ENCODE measurements at regions of chr10 and their contacts with region 1.

Region 1: GRCh38 chr10:21495752-21496342 is 29.6 kb downstream of the SKIDA1 start:
- DNase-seq: peak; percentile 94
- ATAC-seq: peak; percentile 89

Region 2: GRCh38 chr10:21238717-21239116 is 257.1 kb before region 1 on chr10:
- intact Hi-C with region 1: no loop called
- DNase-seq: no peak
- ATAC-seq: no peak

Region 3: DNA sequence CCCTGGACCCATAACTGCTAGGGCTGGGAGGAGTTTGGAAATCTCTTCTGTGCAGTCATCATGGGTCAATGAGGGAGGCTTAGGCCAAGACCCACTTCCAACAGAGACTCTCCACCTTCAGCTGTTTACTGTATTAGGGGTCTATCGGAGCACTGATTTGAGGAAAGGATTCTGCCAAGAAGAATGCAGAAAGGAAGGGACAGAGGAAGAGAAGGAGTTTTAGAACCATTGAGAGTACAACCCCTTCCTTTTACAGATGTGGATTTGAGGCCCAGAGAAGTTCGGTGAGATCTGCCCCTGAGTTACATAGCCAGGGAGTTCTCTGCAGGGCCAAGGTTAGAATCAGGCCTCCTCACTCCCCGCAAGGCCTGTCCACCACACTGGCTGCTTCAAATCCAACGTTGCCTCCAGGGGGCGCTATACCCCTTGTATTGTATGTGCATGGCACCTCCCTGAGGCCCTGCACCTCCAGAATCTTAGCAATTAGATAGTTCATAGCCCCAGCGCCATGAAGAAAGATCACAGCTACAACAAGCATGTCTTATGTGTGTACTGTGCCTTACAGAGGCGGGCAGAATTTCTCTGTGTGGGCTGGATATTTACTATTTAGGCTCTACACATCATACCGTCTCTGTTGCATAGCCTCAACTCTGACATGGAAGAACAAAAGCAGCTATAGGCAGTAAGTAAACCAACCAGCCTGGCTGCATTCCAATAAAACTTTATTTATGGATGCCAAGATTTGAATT is 217.2 kb before region 1 on chr10:
- intact Hi-C with region 1: loop called (anchors 1 kb)
- DNase-seq: peak; percentile 96
- ATAC-seq: peak; percentile 95

Region 4: GRCh38 chr10:21533467-21534279 is 37.8 kb after region 1 on chr10 and contains the start of gene MLLT10:
- intact Hi-C with region 1: loop called (anchors 2 kb)
- DNase-seq: peak; percentile 97
- ATAC-seq: peak; percentile 97
- total RNA-seq, gene MLLT10: 18.3 TPM

Region 5: DNA sequence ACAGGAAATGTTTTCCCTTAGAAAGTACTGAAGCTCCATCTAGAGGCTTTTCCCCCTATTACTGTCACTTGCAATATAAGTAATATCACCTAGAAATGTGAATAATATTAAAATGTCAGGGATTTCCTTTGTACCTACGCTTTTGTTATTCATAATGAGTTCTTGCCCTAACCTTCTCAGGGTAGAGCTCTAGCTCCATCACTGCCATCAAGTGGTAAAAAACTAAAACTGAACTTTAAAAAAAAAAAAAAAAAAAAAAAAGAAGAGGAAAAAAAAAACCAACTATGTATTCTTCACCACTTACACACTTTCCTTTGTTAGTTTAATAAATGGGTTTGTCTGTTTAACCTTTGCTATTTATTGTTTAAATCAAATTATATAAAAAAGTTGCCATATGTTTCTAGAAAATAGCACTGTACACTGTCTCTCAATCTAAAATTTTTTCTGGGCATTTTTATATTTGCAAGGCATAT is 457.8 kb after region 1 on chr10:
- intact Hi-C with region 1: loop called (anchors 2 kb)
- DNase-seq: no peak
- ATAC-seq: no peak